Lower lobe of right lung (tissue), 2 donors: ENCODE measurements at regions of chr2 and their contacts with region 1.

Region 1: GRCh38 chr2:118855451-118856279 is 8.2 kb upstream of the EN1 start:
- DNase-seq: peak; percentile 83
- ATAC-seq: peak; percentile 92
- H3K4me3 ChIP-seq: peak overlapping the region; percentile 38
- H3K27ac ChIP-seq: no peak overlapping the region
- H3K4me1 ChIP-seq: peaks cover 17% of the 10 kb centered on the region
- H3K27me3 ChIP-seq: peaks cover 96% of the 10 kb centered on the region
- CTCF ChIP-seq: peak; percentile 98

Region 2: GRCh38 chr2:118046634-118047210 is 808.9 kb before region 1 on chr2:
- intact Hi-C with region 1: loop called (anchors 10 kb)
- DNase-seq: no peak
- ATAC-seq: peak; percentile 45 to 86
- H3K4me3 ChIP-seq: no peak overlapping the region
- H3K27ac ChIP-seq: no peak overlapping the region
- H3K4me1 ChIP-seq: peaks cover 8% of the 10 kb centered on the region
- H3K27me3 ChIP-seq: peaks cover 4% of the 10 kb centered on the region
- CTCF ChIP-seq: peak; percentile 64

Region 3: DNA sequence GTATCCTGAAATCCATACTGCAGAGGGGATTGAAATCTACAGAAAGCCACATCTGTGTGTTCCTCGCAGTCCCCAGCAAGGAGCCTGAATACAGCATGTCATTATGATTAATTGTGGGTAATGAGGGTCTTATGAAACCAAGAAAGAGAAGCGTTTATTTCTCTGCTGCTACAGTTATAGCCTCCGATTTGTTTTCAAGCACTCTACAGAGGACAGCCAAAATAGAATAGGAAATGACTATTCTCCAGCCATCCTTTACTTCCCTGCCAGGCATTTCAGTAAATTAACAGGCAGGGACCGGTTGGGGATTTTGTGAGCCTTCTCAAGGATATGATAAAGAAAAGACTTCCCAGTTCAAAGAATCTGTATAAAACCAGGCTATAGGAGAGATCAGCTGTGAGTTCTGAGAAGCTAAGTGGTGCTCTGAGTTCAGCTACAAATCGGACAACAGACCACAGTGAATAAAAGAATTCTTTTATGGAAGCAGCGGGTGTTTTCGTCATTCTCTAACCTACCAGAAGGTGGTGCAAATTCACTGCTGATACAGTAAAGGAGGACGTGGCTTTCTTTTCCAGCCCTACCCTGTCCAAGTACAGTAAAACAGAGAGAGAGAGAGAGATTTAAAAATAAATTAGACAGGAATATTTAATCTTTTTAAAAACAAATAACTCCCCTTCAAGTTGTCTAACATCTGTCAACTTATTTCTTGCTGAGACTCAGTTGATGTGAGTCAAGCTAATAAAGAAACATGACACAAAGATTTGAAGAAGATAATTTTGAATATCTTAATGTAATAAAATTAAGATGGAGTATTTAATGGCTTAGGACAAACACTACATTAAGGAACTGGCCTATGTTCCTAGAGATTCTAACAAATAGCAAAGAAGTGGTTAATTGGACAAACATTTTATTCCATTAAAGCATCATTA is 633.7 kb before region 1 on chr2:
- intact Hi-C with region 1: loop called (anchors 10 kb)
- DNase-seq: no peak
- ATAC-seq: peak; percentile 79 to 86
- H3K4me3 ChIP-seq: no peak overlapping the region
- H3K27ac ChIP-seq: no peak overlapping the region
- H3K4me1 ChIP-seq: peaks cover 18% of the 10 kb centered on the region
- H3K27me3 ChIP-seq: peaks cover 77% of the 10 kb centered on the region
- CTCF ChIP-seq: peak; percentile 69

Region 4: DNA sequence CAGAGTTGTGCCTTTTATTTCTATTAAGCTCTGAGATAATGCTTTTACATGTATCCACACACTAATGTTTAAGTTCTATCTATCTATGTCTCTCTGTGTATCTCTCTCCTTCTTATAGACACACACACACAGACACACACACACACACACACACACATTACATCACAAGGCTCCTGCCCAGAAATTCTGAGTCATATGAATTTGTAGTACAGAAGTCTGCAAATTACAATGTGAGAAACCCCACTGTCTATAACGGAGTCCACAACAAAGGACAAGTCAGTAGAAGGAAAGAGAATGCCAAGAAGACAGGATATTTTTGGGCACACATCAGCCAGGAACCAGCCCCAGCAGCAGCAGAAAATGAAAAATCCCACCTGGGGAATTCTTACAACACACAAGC is 150.6 kb before region 1 on chr2:
- intact Hi-C with region 1: no loop called
- DNase-seq: no peak
- ATAC-seq: no peak
- H3K4me3 ChIP-seq: no peak overlapping the region
- H3K27ac ChIP-seq: no peak overlapping the region
- H3K4me1 ChIP-seq: no peaks in the 10 kb centered on the region
- H3K27me3 ChIP-seq: no peaks in the 10 kb centered on the region
- CTCF ChIP-seq: no peak

Region 5: GRCh38 chr2:119068154-119068725 is 212.6 kb after region 1 on chr2:
- intact Hi-C with region 1: no loop called
- DNase-seq: no peak
- ATAC-seq: no peak
- H3K4me3 ChIP-seq: no peak overlapping the region
- H3K27ac ChIP-seq: no peak overlapping the region
- H3K4me1 ChIP-seq: no peaks in the 10 kb centered on the region
- H3K27me3 ChIP-seq: no peaks in the 10 kb centered on the region
- CTCF ChIP-seq: no peak